CD4-positive, alpha-beta T cell (primary cell): ENCODE measurements at regions of chr6 and their contacts with region 1.

Region 1: DNA sequence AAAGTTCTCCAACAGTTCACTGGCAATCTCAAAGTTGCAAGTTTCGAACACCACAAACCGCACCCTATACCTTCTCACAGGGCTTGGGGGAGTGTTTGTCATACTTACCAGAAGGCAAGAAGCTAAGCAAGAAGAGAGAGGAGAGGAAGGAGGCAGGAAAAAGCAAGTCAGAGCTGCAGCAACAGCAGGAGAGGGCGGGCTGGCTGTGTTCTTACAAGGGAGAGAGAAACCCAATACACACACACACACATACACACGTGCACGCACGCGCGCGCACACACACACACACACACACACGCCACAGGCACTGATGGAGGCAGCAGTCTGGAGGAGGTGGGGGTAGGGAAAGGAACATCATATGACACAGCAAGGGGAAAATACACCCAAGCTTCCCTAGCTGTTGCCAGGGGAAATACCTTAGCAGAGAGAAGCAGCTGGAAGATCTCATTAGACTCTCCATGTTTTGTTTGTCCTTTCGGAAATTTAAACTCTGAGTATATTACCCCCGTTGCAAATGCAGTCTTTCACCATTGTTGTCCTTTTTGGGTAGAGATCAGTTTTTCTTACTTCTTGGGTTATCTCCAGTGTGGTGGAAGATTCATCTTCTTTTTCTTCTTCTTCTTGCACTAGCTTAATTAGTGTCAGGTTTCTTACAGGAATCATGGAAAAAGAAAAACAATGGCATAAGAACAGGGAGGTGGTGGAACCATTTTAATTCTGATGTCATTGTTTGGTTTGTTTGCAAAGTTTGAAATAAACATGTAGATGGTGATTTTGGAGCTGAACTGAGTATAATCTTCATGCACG is at the start of gene TXLNB:
- DNase-seq: peak; percentile 66 to 93 (median 78)
- ATAC-seq: peak; percentile 94
- H3K4me3 ChIP-seq: peak within 1 kb of the TSS; percentile 34
- H3K4me3 Mint-ChIP-seq: peak within 1 kb of the TSS; percentile 83
- H3K27ac ChIP-seq: peak within 1 kb of the TSS; percentile 68 to 80
- H3K27ac Mint-ChIP-seq: peak within 1 kb of the TSS; percentile 84
- H3K4me1 ChIP-seq: peaks cover 47% of the 10 kb centered on the region
- H3K4me1 Mint-ChIP-seq: peaks cover 62% of the 10 kb centered on the region
- H3K27me3 ChIP-seq: no peaks in the 10 kb centered on the region
- H3K27me3 Mint-ChIP-seq: no peaks in the 10 kb centered on the region
- CTCF ChIP-seq: no peak
- total RNA-seq, gene TXLNB: 0.17 to 0.19 TPM

Region 2: DNA sequence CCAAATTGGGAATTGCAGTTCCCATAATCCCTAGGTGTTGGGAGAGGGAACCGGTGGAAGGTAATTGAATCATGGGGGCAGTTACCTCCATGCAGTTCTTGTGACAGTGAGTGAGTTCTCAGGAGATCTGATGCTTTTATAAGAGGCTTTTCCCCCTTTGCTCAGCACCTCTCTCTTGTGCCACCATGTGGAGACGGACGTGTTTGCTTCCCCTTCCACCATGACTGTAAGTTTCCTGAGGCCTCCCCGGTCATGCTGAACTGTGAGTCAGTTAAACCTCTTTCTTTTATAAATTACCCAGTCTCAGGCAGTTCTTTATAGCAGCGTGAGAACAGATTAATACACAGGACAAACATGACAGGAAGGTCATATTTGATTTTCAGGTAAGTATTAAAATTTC is 182.5 kb before region 1 on chr6:
- CTCF ChIA-PET with region 1: no interaction called
- POLR2A ChIA-PET with region 1: interaction called, 13 read pairs
- intact Hi-C with region 1: no loop called
- DNase-seq: peak in 6 of 14 experiments; percentile 14 to 62 (median 43)
- ATAC-seq: no peak
- H3K4me3 ChIP-seq: no peak overlapping the region
- H3K4me3 Mint-ChIP-seq: no peak overlapping the region
- H3K27ac ChIP-seq: no peak overlapping the region
- H3K27ac Mint-ChIP-seq: peak overlapping the region; percentile 83
- H3K4me1 ChIP-seq: peaks cover 36% of the 10 kb centered on the region
- H3K4me1 Mint-ChIP-seq: peaks cover 59% of the 10 kb centered on the region
- H3K27me3 ChIP-seq: no peaks in the 10 kb centered on the region
- H3K27me3 Mint-ChIP-seq: no peaks in the 10 kb centered on the region
- CTCF ChIP-seq: peak; percentile 26

Region 3: GRCh38 chr6:139134817-139135581 is 157.0 kb before region 1 on chr6 and contains the start of gene HECA:
- CTCF ChIA-PET with region 1: no interaction called
- POLR2A ChIA-PET with region 1: interaction called, 14 read pairs
- intact Hi-C with region 1: no loop called
- DNase-seq: peak; percentile 97 to 100 (median 99)
- ATAC-seq: peak; percentile 78
- H3K4me3 ChIP-seq: peak within 1 kb of the TSS; percentile 72
- H3K4me3 Mint-ChIP-seq: peak within 1 kb of the TSS; percentile 90
- H3K27ac ChIP-seq: peak within 1 kb of the TSS; percentile 94 to 95
- H3K27ac Mint-ChIP-seq: peak within 1 kb of the TSS; percentile 97
- H3K4me1 ChIP-seq: peaks cover 46% of the 10 kb centered on the region
- H3K4me1 Mint-ChIP-seq: peaks cover 77% of the 10 kb centered on the region
- H3K27me3 ChIP-seq: no peaks in the 10 kb centered on the region
- H3K27me3 Mint-ChIP-seq: no peaks in the 10 kb centered on the region
- CTCF ChIP-seq: no peak
- total RNA-seq, gene HECA: 203 to 207 TPM

Region 4: GRCh38 chr6:139250296-139251044 is 41.5 kb before region 1 on chr6:
- CTCF ChIA-PET with region 1: no interaction called
- POLR2A ChIA-PET with region 1: interaction called, 7 read pairs
- intact Hi-C with region 1: loop called (anchors 5 kb)
- DNase-seq: peak; percentile 32 to 81 (median 46)
- ATAC-seq: peak; percentile 95
- H3K4me3 ChIP-seq: no peak overlapping the region
- H3K4me3 Mint-ChIP-seq: peak overlapping the region; percentile 78
- H3K27ac ChIP-seq: peak overlapping the region in 1 of 2 donors; percentile 45
- H3K27ac Mint-ChIP-seq: peak overlapping the region; percentile 62
- H3K4me1 ChIP-seq: peaks cover 26% of the 10 kb centered on the region
- H3K4me1 Mint-ChIP-seq: peaks cover 42% of the 10 kb centered on the region
- H3K27me3 ChIP-seq: no peaks in the 10 kb centered on the region
- H3K27me3 Mint-ChIP-seq: no peaks in the 10 kb centered on the region
- CTCF ChIP-seq: peak; percentile 57

Region 5: GRCh38 chr6:139262519-139263300 is 29.3 kb before region 1 on chr6:
- CTCF ChIA-PET with region 1: interaction called, 4 read pairs
- POLR2A ChIA-PET with region 1: interaction called, 38 read pairs
- intact Hi-C with region 1: loop called in 1 of 2 experiments (anchors 5 kb)
- DNase-seq: peak in 5 of 14 experiments; percentile 8 to 69 (median 61)
- ATAC-seq: peak; percentile 90
- H3K4me3 ChIP-seq: peak overlapping the region; percentile 35
- H3K4me3 Mint-ChIP-seq: peak overlapping the region; percentile 70
- H3K27ac ChIP-seq: peak overlapping the region; percentile 25 to 26
- H3K27ac Mint-ChIP-seq: peak overlapping the region; percentile 79
- H3K4me1 ChIP-seq: peaks cover 24% of the 10 kb centered on the region
- H3K4me1 Mint-ChIP-seq: peaks cover 27% of the 10 kb centered on the region
- H3K27me3 ChIP-seq: no peaks in the 10 kb centered on the region
- H3K27me3 Mint-ChIP-seq: no peaks in the 10 kb centered on the region
- CTCF ChIP-seq: no peak

Region 6: DNA sequence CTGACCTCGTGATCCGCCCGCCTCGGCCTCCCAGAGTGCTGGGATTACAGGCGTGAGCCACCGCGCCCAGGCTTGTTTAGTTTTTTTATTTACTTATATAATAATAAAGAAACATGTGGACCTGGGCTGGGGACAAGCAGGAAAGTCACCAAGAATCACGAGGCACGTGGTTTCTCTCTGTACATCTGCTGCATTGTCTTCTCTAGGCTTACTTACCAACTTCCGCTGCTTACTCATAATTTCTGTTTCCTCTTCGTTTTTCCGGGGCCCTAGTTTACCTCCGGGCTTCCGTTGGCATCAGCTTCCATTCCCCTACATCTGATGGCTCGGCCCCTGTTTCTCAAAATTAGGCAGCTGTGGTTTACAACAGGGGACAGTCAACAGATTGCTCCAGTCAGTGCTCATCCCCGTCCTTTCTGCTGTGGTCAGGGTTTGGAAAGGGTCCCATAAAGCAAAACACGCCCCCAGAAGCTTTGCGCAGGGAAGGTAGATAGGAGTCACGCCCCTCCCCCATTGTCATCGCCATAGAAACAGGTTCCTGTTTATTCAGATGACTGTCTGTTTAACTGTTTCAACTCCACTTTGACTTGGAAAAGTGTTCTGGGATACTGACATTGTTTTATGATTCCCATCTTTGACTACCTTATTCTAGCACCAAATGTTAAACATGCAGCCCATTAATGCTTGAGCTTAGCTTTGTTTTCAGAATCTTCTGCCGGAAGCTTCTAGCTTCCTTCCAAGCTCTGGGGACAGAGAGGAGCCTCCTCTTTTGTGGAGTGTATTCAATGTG is 31.7 kb after region 1 on chr6:
- CTCF ChIA-PET with region 1: interaction called, 3 read pairs
- POLR2A ChIA-PET with region 1: interaction called, 52 read pairs
- intact Hi-C with region 1: loop called (anchors 1 to 2 kb)
- DNase-seq: peak; percentile 61 to 92 (median 72)
- ATAC-seq: peak; percentile 86
- H3K4me3 ChIP-seq: peak overlapping the region; percentile 57
- H3K4me3 Mint-ChIP-seq: peak overlapping the region; percentile 93
- H3K27ac ChIP-seq: peak overlapping the region; percentile 91 to 97
- H3K27ac Mint-ChIP-seq: peak overlapping the region; percentile 99
- H3K4me1 ChIP-seq: peaks cover 30% of the 10 kb centered on the region
- H3K4me1 Mint-ChIP-seq: peaks cover 50% of the 10 kb centered on the region
- H3K27me3 ChIP-seq: no peaks in the 10 kb centered on the region
- H3K27me3 Mint-ChIP-seq: no peaks in the 10 kb centered on the region
- CTCF ChIP-seq: no peak

Region 7: GRCh38 chr6:139369568-139370282 is 77.7 kb after region 1 on chr6:
- CTCF ChIA-PET with region 1: interaction called, 7 read pairs
- POLR2A ChIA-PET with region 1: interaction called, 83 read pairs
- intact Hi-C with region 1: loop called in 1 of 2 experiments (anchors 2 kb)
- DNase-seq: peak in 4 of 14 experiments; percentile 40 to 71 (median 64)
- ATAC-seq: no peak
- H3K4me3 ChIP-seq: no peak overlapping the region
- H3K4me3 Mint-ChIP-seq: peak overlapping the region; percentile 98
- H3K27ac ChIP-seq: peak overlapping the region; percentile 14 to 33
- H3K27ac Mint-ChIP-seq: peak overlapping the region; percentile 97
- H3K4me1 ChIP-seq: peaks cover 20% of the 10 kb centered on the region
- H3K4me1 Mint-ChIP-seq: peaks cover 50% of the 10 kb centered on the region
- H3K27me3 ChIP-seq: no peaks in the 10 kb centered on the region
- H3K27me3 Mint-ChIP-seq: no peaks in the 10 kb centered on the region
- CTCF ChIP-seq: peak; percentile 82